ENCODE measurements at regions of chr4 and their contacts with region 1.

Region 1: DNA sequence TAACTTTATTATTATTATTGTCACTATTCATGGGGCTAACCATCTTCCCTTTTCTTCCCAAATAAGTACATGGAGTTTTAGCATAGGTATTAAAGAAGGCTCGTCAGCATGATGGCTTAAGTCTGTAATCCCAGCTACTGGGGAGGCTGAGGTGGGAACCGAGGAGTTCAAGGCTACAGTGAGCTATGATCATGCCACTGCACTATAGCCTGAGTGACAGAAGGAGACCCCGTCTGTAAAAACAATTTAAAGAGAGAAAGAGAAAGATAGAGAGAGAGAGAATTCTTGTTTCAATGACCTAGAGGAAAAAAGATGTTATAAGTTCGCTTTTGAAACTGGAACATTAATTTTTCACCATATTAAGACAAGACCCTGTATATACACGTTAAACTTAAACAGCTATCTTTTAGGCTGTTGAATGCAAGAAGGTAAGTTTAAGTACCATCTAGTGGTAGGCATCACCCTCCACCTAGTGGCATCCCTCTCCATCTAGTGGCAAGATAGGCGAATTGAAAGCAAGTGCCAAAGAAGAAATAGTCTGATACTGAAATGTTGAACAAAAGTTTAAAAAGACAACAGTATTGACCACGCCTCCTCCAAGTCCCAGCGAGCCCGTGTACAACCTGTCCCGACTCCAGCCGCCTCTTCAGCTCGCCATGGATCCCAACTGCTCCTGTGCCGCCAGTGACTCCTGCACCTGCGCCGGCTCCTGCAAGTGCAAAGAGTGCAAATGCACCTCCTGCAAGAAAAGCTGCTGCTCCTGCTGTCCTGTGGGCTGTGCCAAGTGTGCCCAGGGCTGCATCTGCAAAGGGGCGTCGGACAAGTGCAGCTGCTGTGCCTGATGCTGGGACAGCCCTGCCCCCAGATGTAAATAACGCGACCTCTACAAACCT is 26.0 kb upstream of the YTHDC1 start:
- DNase-seq: no peak
- ATAC-seq: no peak

Region 2: DNA sequence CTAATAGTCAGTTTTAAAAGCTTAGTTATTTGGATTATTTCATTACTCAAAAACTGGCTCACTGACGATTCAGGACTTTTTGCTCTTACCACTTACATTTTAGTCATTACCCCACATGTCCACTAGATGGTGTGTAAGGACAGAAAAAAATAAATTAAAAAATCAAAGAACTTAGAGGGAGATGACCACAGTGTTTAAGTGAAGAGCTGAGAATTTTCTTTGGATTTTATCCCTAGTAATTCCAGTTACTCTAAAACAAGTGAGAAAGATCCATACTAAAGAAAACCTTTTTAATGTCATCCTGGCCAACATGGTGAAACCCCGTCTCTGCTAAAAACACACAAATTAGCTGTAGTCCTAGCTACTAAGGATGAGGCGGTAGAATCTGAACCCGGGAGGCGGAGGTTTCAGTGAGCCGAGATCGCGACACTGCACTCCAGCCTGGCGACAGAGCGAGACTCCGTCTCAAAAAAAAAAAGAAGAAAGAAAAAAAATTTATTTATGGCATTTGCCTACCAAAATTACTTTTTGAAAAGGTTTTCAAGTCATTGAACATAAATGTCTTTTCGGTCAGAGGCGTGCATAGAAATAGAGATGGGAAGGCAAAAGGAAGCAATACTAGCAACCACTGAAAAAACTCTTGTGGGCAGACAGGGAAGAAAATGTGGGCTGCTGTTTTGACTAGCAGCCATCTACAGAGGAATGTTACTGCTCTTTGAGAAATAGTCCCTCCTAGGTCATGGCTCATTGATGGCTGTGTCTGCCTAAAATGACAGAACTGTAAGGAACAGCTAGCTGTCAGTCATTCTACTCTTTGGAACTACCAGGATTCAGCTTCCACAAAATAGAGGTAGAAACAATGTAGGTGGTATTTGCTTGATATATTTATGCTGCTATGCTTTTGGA is 103.8 kb before region 1 on chr4:
- intact Hi-C with region 1: loop called (anchors 1 kb)
- DNase-seq: no peak
- ATAC-seq: no peak

Region 3: DNA sequence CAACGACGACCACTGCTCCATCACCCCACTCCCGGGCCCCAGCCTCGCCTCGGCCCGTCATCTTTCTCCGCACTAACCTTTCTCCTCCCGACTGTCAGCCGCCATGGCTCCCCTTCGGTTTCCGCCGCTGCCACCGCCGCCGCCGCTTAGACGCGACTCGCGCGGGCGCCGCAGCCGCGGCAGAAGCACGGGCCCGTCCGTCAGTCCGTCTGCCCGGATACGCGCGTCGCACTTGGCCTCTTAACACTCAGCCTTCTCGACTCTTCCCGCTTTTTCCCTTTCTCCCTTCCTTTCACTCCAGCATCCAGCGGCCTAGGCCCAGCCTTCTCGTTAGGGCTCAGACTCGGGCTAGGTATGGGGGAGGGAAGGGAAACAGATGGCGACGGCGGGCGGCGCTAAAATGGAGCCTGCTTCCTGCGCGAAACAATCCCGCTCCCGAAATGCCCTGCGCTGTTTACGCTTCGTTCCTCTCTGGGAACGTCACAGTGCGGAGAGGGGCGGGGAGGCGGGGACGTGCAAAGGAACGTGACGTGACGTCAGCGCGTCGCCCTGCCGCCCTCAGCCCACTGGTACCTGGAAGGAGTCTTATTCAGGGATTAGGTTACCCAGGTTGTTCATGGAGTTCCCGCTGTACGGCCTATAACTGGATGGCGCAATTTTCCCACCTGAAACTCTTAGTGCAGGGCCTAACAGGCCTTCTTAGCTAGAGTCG is 26.1 kb before region 1 on chr4 and contains the start of gene YTHDC1:
- intact Hi-C with region 1: loop called (anchors 1 kb)
- DNase-seq: peak; percentile 98
- ATAC-seq: peak; percentile 99
- total RNA-seq, gene YTHDC1: 52.0 TPM

Region 4: DNA sequence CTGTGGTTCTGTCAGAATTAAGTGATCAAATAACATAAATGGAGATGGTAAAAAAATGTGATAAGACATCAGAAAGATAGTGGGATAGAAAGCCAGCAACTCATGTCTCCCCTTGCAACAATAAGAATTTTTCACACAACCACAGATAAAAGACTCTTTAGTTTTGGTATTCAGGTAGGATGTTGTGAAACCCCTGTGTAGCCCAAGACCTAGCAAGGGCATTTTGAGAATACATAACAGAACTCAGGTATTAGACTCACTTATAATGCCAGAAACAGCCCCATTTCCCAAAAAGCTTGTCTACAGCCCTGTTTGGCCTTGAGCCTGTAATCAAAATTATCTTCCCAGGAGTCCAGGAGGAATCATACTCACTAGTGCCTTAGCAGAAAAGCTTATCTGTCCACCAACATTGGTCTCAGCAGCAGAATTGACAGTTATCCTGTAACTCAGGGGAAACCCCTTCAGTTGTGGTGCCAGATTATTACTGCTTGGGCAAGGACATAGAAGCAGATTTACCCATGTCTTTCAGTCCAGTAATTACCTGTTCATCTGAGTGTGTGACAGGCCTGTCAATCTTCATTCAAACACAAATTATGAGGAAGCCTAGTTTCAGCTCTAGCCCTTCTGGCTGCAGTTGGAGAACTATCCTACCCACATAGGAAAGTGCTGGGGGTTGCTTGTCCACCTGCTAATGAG is 241.2 kb after region 1 on chr4:
- intact Hi-C with region 1: no loop called
- DNase-seq: no peak
- ATAC-seq: no peak